Activated T-helper 1 cell treated with anti-CD3 and anti-CD28 coated beads, Interleukin-12 subunit alpha, Interleukin-12 subunit beta, Interleukin-2, Interleukin-4 antibody, amounts not matched to agents 30 ng/mL and 10 ng/mL and 1 ng/mL, durations not matched to agents 14 hours and 24 hours and 36 hours (primary cell): ENCODE measurements at regions of chr6 and their contacts with region 1.

Region 1: GRCh38 chr6:52995913-52996645 is 995 bp upstream of the GSTA4 start:
- DNase-seq: no peak
- H3K4me3 Mint-ChIP-seq: peak overlapping the region; percentile 88
- H3K27ac Mint-ChIP-seq: peak overlapping the region; percentile 99
- H3K4me1 Mint-ChIP-seq: peaks cover 47% of the 10 kb centered on the region
- H3K27me3 Mint-ChIP-seq: peaks cover 11% of the 10 kb centered on the region

Region 2: DNA sequence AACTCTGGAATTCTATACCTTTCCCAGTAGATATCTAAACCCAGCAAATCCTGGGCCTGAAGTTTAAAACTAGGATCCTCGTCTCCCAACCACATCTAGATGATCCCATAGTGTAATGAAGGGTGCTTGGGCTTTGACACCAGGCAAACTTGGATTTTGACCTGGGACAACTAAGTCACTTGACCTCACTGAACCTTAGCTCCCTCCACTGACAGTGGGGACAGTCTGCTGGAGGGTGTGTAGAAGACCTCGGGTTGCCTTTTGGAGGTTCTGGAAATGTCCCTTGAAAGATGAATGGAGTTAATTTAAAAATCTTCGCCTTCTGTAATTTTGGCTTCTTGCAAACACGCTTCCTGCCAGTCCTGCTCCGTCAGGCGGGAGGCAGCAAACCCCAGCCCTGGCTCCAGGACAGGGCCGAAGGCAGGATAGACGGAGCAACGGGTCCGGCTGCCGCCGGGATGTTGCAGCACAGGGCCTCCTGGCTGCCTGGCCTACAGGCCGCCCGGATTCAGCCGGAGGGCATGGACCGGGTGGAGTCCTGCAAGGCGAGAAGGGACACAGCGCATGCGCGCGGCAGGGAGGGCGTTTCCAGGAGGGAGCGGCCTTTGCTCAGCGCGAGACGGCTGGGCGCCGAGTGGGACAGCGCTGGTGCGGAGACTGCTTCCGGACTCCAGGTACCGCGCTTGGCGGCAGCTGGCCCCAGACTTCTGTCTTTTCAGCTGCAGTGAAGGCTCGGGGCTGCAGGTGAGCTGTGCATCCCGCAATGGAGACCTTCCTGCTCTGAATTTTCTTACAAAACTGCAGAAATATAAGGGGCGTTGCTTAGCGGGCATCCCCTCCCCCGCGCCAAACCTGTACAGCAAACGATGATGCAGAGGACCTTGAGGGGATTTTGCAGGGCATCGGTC is 325.3 kb before region 1 on chr6 and contains the start of gene TMEM14A:
- intact Hi-C with region 1: loop called (anchors 5 kb)
- DNase-seq: peak; percentile 91
- H3K4me3 Mint-ChIP-seq: peak within 1 kb of the TSS; percentile 92
- H3K27ac Mint-ChIP-seq: peak within 1 kb of the TSS; percentile 60
- H3K4me1 Mint-ChIP-seq: peaks cover 33% of the 10 kb centered on the region
- H3K27me3 Mint-ChIP-seq: peaks cover 5% of the 10 kb centered on the region
- total RNA-seq, gene TMEM14A: 12.2 and 15.1 TPM in 2 replicates

Region 3: DNA sequence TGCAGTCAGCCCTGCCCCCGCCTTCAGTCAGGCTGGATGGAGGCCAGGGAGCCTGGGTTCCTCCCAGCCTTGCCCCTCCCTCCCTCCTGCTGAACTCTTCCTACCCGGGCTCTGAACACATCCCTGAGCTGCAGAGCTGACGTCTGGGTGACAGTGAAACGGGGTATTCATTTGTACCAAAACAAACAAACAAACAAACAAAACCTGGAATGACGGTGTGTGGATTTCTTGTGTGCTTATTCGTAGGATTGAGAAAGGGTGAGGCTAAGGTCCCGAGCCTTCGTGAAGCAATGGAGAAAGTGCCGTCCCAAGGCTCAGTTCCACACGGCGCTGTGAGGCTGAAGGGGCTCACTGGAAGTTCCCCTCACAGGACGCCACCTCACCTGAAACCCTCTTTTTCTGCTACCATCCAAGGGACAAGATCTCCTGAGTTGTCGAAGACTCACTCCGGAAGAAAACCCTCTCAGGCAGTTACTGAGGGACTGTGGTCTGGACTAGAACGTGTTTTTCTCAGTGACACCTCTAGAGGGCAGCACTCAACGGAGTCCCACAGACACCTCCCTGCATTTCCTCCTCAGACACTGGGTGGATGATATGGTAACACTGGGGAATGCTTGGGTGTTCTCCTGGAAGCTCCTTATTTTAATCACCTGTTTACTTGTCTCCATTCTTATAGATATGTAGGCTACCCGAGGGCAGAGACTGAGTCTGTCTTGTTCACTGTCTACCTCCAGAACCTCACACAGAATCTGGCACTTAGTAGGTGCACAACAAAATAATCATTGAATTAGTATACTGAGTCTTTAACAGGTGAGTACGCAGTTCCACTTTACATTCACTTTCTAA is 113.9 kb before region 1 on chr6:
- intact Hi-C with region 1: loop called (anchors 1 kb)
- DNase-seq: peak; percentile 46
- H3K4me3 Mint-ChIP-seq: peak overlapping the region; percentile 78
- H3K27ac Mint-ChIP-seq: peak overlapping the region; percentile 11
- H3K4me1 Mint-ChIP-seq: peaks cover 17% of the 10 kb centered on the region
- H3K27me3 Mint-ChIP-seq: peaks cover 2% of the 10 kb centered on the region

Region 4: DNA sequence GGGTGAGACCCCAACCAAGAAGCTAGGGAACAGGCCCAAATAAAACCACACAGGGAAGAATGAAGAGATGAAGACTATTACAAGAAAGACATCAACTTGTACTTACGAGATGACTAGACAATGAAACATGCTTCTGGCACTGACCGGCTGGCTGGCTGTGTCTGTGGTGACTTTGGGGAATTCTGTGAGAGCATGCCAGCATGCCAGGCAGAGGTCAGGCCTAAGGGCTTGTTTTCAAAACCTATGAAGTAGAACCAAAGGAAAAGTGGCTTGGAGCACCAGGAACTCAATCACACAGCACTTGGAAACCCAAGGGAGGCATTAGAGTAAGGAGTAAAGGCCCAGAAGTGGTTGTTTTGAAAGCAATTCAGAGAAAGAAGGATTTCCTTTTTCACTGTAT is 58.2 kb before region 1 on chr6:
- intact Hi-C with region 1: no loop called
- DNase-seq: no peak
- H3K4me3 Mint-ChIP-seq: no peak overlapping the region
- H3K27ac Mint-ChIP-seq: no peak overlapping the region
- H3K4me1 Mint-ChIP-seq: no peaks in the 10 kb centered on the region
- H3K27me3 Mint-ChIP-seq: peaks cover 5% of the 10 kb centered on the region

Region 5: DNA sequence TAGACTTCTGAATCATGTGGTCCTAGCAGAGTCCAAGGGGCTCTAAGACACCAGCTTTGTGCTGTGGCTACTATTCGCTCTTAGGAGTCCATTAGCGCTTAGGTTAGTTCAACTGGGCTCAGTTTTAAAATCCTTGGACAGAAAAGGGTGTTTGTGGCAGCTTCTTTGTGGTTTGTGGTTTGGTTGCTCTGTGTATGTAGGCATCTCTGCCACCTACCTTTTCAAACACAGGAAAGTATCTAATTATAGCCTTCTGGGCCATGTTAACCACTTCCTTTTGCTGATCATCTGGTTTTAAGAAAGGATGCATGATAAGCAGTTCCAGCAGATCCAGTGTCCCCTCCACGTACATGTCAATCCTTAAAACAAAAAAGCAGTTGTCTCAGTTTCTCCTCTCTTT is 11.8 kb before region 1 on chr6:
- intact Hi-C with region 1: loop called (anchors 1 kb)
- DNase-seq: peak; percentile 47
- H3K4me3 Mint-ChIP-seq: peak overlapping the region; percentile 44
- H3K27ac Mint-ChIP-seq: peak overlapping the region; percentile 78
- H3K4me1 Mint-ChIP-seq: peaks cover 71% of the 10 kb centered on the region
- H3K27me3 Mint-ChIP-seq: peaks cover 6% of the 10 kb centered on the region

Region 6: DNA sequence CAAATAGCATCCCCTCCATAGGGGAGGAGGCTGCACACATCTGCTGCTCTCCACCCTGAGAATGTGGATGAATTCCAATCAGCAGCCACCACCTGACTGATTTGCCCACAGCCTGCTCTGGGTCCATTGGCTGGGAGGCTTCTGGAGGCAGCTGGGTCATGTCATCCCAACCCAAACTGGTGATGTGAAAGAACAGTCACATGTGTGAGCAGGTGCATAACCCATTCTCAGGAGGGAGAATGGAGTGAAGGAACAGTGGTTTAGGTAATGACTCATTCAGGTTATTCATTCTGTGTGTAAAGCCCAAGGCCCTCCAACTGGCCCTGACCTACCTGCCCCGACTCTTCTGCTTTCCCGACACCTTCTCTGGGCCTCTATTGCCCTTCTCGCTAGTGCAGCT is 243.4 kb after region 1 on chr6:
- intact Hi-C with region 1: loop called (anchors 10 kb)
- DNase-seq: no peak
- H3K4me3 Mint-ChIP-seq: no peak overlapping the region
- H3K27ac Mint-ChIP-seq: no peak overlapping the region
- H3K4me1 Mint-ChIP-seq: peaks cover 31% of the 10 kb centered on the region
- H3K27me3 Mint-ChIP-seq: no peaks in the 10 kb centered on the region